ENCODE measurements at regions of chr11 and their contacts with region 1.

Region 1: GRCh38 chr11:2420502-2421225 is 20.1 kb downstream of the TSSC4 start:
- DNase-seq: peak; percentile 69 to 91
- ATAC-seq: peak; percentile 90 to 97
- H3K4me3 ChIP-seq: no peak overlapping the region
- H3K27ac ChIP-seq: peak overlapping the region in 1 of 2 experiments; percentile 62; a peak in 3 of 6 replicates
- H3K4me1 ChIP-seq: no peaks in the 10 kb centered on the region
- CTCF ChIP-seq: peak; percentile 84
- EP300 ChIP-seq: no peak
- POLR2A ChIP-seq: no peak
- RAD21 ChIP-seq: peak; percentile 92

Region 2: DNA sequence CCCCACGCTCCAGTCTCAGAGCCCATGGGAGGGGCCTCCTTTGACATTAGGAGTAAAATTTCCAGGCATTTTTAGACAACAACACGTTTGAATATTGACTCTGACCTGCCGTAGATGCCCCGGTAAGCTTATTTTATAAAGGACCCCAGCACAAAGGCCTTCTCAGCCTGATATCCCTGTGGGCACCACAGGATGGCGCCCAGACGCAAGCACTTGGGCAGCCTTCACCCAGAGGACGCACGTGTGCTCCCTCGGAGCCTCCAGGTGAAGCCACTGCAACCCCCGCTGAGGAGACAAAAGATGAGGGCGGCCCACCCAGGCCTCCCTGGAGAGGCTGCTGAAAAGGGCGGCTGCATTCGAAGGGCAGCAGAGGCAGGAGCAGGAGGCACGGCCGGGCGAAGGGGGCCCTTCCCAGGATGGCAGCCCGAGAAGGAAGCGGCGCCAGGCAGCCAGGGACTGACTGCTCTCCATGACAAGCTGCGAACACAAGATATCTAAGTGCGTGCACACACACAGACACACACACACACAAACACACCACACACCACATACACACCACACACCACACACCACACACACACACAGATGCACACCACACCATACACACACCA is 233.9 kb before region 1 on chr11:
- CTCF ChIA-PET with region 1: interaction called, 100 read pairs
- POLR2A ChIA-PET with region 1: no interaction called
- DNase-seq: peak; percentile 76
- ATAC-seq: peak; percentile 72 to 92
- H3K4me3 ChIP-seq: no peak overlapping the region
- H3K27ac ChIP-seq: peak overlapping the region in 1 of 2 experiments; percentile 69; a peak in 2 of 6 replicates
- H3K4me1 ChIP-seq: no peaks in the 10 kb centered on the region
- CTCF ChIP-seq: peak; percentile 56
- EP300 ChIP-seq: no peak
- POLR2A ChIP-seq: no peak
- RAD21 ChIP-seq: peak; percentile 58 to 63; a peak in 4 of 5 replicates

Region 3: DNA sequence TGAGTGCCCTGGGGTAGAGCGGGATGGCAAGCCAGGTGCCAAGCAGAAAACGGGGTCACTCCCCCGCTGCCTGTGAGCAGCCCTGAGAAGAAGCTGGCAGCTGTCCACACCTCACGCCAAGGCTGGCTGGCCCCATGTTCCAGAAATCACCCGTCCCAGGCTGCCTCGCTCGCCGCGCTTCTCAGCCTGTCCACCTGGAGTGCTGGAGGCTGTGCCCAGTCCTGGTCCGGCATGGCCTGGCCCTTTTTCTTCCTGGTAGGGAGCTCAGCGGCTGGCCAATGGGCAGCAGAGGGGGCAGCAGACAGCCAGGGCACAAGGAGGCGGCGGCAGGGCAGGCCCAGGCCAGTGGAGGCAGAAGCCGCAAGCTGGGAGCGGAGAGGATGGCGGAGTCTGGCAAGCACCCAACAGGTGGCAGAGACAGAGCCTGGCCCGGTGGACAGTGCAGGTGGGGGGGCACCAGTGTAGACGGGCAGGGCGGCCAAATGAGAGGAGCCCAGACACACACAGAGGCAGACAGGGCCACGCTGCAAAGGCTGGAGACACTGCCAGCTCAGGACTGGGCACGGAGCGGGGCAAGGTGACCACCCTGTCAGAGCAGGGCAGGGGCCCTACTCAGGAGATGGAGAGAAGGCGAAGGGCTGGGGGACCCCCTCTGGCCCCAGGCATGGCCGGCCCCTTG is 211.8 kb before region 1 on chr11:
- CTCF ChIA-PET with region 1: interaction called, 16 read pairs
- POLR2A ChIA-PET with region 1: no interaction called
- DNase-seq: peak in 1 of 2 experiments; percentile 38
- ATAC-seq: peak; percentile 49 to 75; a peak in 5 of 6 replicates
- H3K4me3 ChIP-seq: no peak overlapping the region
- H3K27ac ChIP-seq: peak overlapping the region in 1 of 2 experiments; percentile 80; a peak in 2 of 6 replicates
- H3K4me1 ChIP-seq: peaks cover 31% of the 10 kb centered on the region
- CTCF ChIP-seq: no peak
- EP300 ChIP-seq: no peak
- POLR2A ChIP-seq: no peak
- RAD21 ChIP-seq: no peak

Region 4: DNA sequence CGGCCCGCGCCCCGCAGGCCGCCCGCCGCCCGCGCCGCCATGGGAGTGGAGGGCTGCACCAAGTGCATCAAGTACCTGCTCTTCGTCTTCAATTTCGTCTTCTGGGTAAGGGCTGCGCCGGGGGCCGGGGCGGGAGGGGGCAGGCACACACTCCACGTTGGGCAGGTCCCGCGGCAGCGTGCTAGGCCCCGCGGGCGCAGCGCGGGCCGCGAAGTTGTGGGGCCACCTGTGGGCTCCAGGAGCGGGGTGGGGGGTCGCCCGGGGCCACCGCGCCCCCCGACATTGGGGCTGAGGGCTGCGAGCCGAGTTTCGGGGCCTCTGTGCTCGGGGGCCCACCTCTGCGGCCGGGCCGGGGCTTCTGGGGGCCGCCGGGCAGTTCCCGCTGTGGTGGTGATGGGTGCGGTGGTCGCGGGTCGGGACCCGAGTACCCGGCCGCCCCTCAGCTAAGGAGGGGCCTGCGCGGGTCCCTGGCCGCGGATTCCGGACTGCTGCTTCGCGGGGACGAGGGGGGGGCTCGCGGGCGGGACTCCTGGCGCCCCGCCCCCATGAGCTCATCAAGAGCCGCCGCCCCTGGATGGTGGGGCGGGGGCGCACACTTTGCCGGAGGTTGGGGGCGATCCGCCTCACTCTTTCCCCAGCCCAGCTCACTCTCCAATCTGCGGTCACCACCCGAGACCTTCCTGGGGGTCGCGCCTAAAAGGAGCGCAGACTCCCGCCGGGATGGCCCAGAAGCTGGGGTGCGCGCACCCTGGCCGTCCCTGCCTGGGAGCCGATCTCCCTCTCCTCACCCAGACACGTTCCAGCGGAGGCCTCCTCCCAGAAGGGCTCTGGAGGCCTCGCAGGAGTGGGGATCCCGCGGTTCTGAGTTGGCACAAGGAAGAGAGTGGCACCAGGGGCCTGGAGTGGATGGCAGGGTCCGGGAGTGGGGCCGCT is 42.9 kb before region 1 on chr11:
- CTCF ChIA-PET with region 1: interaction called, 19 read pairs
- POLR2A ChIA-PET with region 1: interaction called, 3 read pairs
- DNase-seq: peak; percentile 37 to 41
- ATAC-seq: peak; percentile 25 to 59; a peak in 5 of 6 replicates
- H3K4me3 ChIP-seq: peak overlapping the region; percentile 100
- H3K27ac ChIP-seq: peak overlapping the region; percentile 92 to 98
- H3K4me1 ChIP-seq: peaks cover 39% of the 10 kb centered on the region
- CTCF ChIP-seq: no peak
- EP300 ChIP-seq: no peak
- POLR2A ChIP-seq: no peak
- RAD21 ChIP-seq: no peak

Region 5: GRCh38 chr11:2400069-2400760 is 20.4 kb before region 1 on chr11 and contains the start of gene TSSC4:
- CTCF ChIA-PET with region 1: interaction called, 227 read pairs
- POLR2A ChIA-PET with region 1: no interaction called
- DNase-seq: peak; percentile 99 to 100
- ATAC-seq: peak; percentile 86 to 93
- H3K4me3 ChIP-seq: peak within 1 kb of the TSS; percentile 100
- H3K27ac ChIP-seq: peak within 1 kb of the TSS; percentile 97 to 98
- H3K4me1 ChIP-seq: peaks cover 16% of the 10 kb centered on the region
- CTCF ChIP-seq: peak; percentile 91
- EP300 ChIP-seq: no peak
- POLR2A ChIP-seq: peak; percentile 89
- RAD21 ChIP-seq: peak; percentile 60 to 66
- polyA plus RNA-seq, gene TSSC4: 21.8 and 22.2 TPM in 2 replicates

Region 6: GRCh38 chr11:2452321-2453012 is 31.8 kb after region 1 on chr11:
- CTCF ChIA-PET with region 1: interaction called, 14 read pairs
- POLR2A ChIA-PET with region 1: no interaction called
- DNase-seq: no peak
- ATAC-seq: no peak
- H3K4me3 ChIP-seq: no peak overlapping the region
- H3K27ac ChIP-seq: no peak overlapping the region
- H3K4me1 ChIP-seq: no peaks in the 10 kb centered on the region
- CTCF ChIP-seq: no peak
- EP300 ChIP-seq: no peak
- POLR2A ChIP-seq: no peak
- RAD21 ChIP-seq: no peak

Measured in A549 (cell line).